Adrenal gland (tissue), 19 donors: ENCODE measurements at regions of chr3 and their contacts with region 1.

Region 1: DNA sequence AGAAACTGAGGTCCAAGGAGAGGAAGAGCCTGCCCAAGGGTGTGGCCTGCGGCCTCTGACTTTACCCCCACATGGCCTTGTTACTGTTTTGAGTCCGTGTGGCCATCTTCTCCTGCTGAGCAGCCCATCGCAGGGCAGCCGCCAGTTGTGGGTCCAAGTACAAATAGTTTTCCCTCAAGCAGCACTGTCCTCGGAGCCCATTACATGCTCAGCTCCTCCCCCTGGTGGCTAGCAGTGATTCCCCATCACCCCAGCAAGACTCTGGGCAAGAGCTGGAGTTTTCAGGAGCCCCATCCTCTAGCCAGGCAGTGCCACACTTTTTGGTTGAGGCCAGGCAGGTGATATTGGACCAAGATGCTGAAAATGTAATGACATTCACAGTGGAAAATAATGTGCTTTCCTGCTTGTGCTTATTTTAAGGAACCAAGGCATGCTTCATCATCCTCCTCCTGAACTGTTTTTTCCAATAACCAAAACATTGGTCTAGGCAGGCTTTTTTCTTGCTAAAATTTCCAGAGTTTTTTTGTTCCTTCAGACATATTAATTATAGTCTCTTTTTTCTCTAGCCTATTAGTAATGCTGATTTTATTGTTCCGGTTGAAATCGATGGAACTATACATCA is 23.2 kb upstream of the VILL start:
- DNase-seq: peak; percentile 67 to 88 (median 72)
- H3K4me3 ChIP-seq: no peak overlapping the region
- H3K27ac ChIP-seq: no peak overlapping the region
- H3K4me1 ChIP-seq: no peaks in the 10 kb centered on the region
- H3K27me3 ChIP-seq: no peaks in the 10 kb centered on the region
- CTCF ChIP-seq: peak; percentile 63 to 88 (median 82)
- POLR2A ChIP-seq: no peak

Region 2: GRCh38 chr3:37645517-37646380 is 321.6 kb before region 1 on chr3:
- intact Hi-C with region 1: no loop called
- DNase-seq: peak; percentile 80 to 96 (median 93)
- H3K4me3 ChIP-seq: no peak overlapping the region
- H3K27ac ChIP-seq: peak overlapping the region; percentile 55 to 82 (median 75)
- H3K4me1 ChIP-seq: peaks cover 21 to 32% of the 10 kb centered on the region in 2 donors
- H3K27me3 ChIP-seq: no peaks in the 10 kb centered on the region
- CTCF ChIP-seq: no peak
- POLR2A ChIP-seq: no peak

Region 3: DNA sequence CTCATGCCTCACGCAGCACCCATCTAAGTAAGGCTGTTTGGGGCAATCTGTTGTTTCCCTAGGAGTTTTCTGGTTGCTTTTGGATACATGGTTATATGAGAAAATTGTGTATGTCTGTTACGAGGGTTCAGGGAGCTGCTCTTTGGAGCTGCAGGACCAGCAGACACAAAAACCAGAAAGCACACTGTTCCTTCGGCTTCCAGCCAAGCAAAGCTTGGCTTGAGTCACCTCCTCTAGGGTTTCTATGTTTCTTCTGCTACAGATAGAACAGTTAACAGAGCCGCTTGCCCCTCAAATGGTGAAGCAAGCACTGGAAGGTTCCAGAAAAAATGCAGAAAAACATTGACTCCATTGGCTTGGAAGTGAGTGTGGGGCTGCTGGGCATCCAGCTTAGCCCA is 154.9 kb before region 1 on chr3:
- intact Hi-C with region 1: no loop called
- DNase-seq: no peak
- H3K4me3 ChIP-seq: no peak overlapping the region
- H3K27ac ChIP-seq: peak overlapping the region in 2 of 5 donors; percentile 48 to 53
- H3K4me1 ChIP-seq: peaks cover 0 to 20% of the 10 kb centered on the region in 2 donors
- H3K27me3 ChIP-seq: no peaks in the 10 kb centered on the region
- CTCF ChIP-seq: no peak
- POLR2A ChIP-seq: no peak

Region 4: GRCh38 chr3:37855363-37855970 is 111.9 kb before region 1 on chr3:
- intact Hi-C with region 1: loop called (anchors 2 kb)
- DNase-seq: peak; percentile 77 to 96 (median 89)
- H3K4me3 ChIP-seq: no peak overlapping the region
- H3K27ac ChIP-seq: no peak overlapping the region
- H3K4me1 ChIP-seq: peaks cover 0 to 4% of the 10 kb centered on the region in 2 donors
- H3K27me3 ChIP-seq: no peaks in the 10 kb centered on the region
- CTCF ChIP-seq: peak; percentile 92 to 98 (median 95)
- POLR2A ChIP-seq: no peak

Region 5: GRCh38 chr3:38397320-38397719 is 429.9 kb after region 1 on chr3:
- intact Hi-C with region 1: no loop called
- DNase-seq: peak in 3 of 7 donors; percentile 18 to 27 (median 21)
- H3K4me3 ChIP-seq: no peak overlapping the region
- H3K27ac ChIP-seq: no peak overlapping the region
- H3K4me1 ChIP-seq: no peaks in the 10 kb centered on the region
- H3K27me3 ChIP-seq: no peaks in the 10 kb centered on the region
- CTCF ChIP-seq: no peak
- POLR2A ChIP-seq: no peak